Activated CD8-positive, alpha-beta T cell treated with anti-CD3 and anti-CD28 coated beads, Interleukin-2, amount 10 ng/mL, durations not matched to agents 7 days and 5 days (primary cell): ENCODE measurements at regions of chr20 and their contacts with region 1.

Region 1: DNA sequence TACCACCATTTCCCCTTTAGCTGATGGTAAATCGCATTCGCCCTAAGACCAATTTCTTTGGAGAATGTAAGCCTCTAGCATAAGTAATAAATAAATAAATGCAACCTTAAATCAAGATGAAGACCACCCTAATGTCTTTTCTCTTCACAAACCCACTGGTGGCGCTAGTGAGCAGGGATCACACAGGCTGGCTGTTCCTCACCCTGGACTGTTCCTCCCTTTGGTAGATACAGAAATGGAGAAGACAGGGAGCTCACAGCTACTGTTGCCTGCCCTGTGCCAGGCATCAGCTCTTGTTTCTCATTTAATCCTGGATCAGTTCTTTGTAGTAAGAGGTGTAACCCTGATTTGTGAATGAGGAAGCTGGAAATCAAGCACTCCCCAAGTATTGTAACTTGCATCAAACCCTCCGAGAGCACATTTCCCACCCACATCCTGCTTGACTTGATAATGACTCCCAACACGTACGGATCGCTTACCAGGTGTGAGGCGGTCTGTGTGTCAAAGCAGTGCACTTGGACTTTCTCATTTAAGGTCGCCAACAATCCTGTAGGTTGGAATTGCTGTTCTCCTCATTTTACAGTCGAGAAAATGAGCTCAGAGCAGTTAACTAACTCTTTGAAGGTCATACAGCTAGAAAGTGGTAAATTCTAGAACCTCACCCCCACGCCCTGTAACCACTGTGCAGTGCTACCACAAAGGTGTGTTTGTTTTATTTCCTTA is 236.1 kb downstream of the TSHZ2 start:
- DNase-seq: peak; percentile 44
- ATAC-seq: peak; percentile 71
- H3K4me3 Mint-ChIP-seq: peak overlapping the region; percentile 8
- H3K27ac Mint-ChIP-seq: peak overlapping the region; percentile 61
- H3K4me1 Mint-ChIP-seq: peaks cover 13% of the 10 kb centered on the region
- H3K27me3 Mint-ChIP-seq: peaks cover 5% of the 10 kb centered on the region

Region 2: DNA sequence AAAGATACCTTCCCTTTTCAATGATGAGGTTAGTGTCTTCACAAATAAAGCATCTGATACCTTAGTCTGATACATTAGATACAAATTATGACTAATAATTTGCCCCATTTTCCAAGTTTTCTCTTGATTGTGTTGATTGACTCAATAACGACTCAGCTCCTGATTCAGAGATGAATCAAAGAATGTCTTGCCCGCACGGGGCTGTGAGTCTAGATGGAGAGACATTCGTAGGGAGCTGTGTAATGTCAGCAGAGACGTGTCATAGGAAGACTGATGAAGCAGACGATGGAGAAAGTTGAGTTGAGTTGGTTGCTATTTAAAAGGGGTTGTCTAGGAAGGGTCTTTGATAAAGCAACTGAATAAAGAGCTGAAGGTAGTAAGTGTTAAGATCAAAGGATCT is 157.9 kb before region 1 on chr20:
- CTCF ChIA-PET with region 1: no interaction called
- POLR2A ChIA-PET with region 1: no interaction called
- DNase-seq: no peak
- ATAC-seq: no peak
- H3K4me3 Mint-ChIP-seq: no peak overlapping the region
- H3K27ac Mint-ChIP-seq: no peak overlapping the region
- H3K4me1 Mint-ChIP-seq: no peaks in the 10 kb centered on the region
- H3K27me3 Mint-ChIP-seq: peaks cover 2% of the 10 kb centered on the region

Region 3: GRCh38 chr20:53220482-53221307 is 12.4 kb after region 1 on chr20:
- CTCF ChIA-PET with region 1: interaction called, 14 read pairs
- POLR2A ChIA-PET with region 1: no interaction called
- DNase-seq: no peak
- ATAC-seq: no peak
- H3K4me3 Mint-ChIP-seq: no peak overlapping the region
- H3K27ac Mint-ChIP-seq: no peak overlapping the region
- H3K4me1 Mint-ChIP-seq: peaks cover 10% of the 10 kb centered on the region
- H3K27me3 Mint-ChIP-seq: peaks cover 11% of the 10 kb centered on the region

Region 4: GRCh38 chr20:53434662-53435061 is 226.4 kb after region 1 on chr20:
- CTCF ChIA-PET with region 1: no interaction called
- POLR2A ChIA-PET with region 1: no interaction called
- DNase-seq: no peak
- ATAC-seq: no peak
- H3K4me3 Mint-ChIP-seq: no peak overlapping the region
- H3K27ac Mint-ChIP-seq: no peak overlapping the region
- H3K4me1 Mint-ChIP-seq: no peaks in the 10 kb centered on the region
- H3K27me3 Mint-ChIP-seq: peaks cover 2% of the 10 kb centered on the region